ENCODE measurements at regions of chr15 and their contacts with region 1.

Region 1: GRCh38 chr15:75207618-75208500 is 6.2 kb downstream of the C15orf39 start:
- DNase-seq: no peak
- H3K4me3 ChIP-seq: no peak overlapping the region
- H3K27ac ChIP-seq: peak overlapping the region; percentile 1 to 23
- H3K4me1 ChIP-seq: peaks cover 0 to 77% (median 56%) of the 10 kb centered on the region in 4 donors
- H3K27me3 ChIP-seq: no peaks in the 10 kb centered on the region
- CTCF ChIP-seq: no peak

Region 2: DNA sequence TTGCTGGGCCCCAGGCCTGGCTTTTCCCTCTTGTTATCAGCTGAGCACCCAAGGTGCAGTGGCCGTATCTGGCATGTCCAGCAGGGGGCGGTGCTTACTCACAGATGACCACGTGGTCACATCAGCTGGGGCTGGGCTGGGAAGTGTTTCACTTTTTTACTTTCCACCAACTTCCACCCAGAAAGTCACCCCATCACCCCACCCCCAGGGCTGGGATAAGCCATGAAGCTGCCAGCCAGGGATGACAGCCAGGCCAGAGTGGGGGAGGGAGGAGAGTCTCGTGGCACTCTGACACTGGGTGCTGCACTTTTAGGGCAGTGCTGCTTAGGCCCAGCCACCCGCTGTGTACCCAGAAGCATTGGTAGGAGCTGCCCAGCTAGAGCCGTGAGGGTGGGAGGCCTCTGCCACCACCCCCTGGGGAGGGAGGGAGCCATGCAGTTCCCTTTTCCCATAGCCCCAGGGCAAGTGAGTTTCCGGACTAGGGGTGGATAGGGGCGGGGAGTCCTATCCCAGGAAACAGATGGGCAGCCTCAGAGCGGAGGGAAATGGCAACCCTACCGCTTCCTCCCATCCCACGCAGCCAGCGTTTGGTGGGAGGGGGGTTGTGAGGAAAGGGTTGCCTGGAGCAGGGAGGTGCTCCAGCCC is 178.4 kb before region 1 on chr15:
- intact Hi-C with region 1: loop called (anchors 2 kb)
- DNase-seq: peak; percentile 97
- H3K4me3 ChIP-seq: peak overlapping the region; percentile 14 to 40
- H3K27ac ChIP-seq: peak overlapping the region; percentile 78 to 84
- H3K4me1 ChIP-seq: peaks cover 8 to 51% (median 41%) of the 10 kb centered on the region in 4 donors
- H3K27me3 ChIP-seq: no peaks in the 10 kb centered on the region
- CTCF ChIP-seq: peak; percentile 82 to 99

Region 3: DNA sequence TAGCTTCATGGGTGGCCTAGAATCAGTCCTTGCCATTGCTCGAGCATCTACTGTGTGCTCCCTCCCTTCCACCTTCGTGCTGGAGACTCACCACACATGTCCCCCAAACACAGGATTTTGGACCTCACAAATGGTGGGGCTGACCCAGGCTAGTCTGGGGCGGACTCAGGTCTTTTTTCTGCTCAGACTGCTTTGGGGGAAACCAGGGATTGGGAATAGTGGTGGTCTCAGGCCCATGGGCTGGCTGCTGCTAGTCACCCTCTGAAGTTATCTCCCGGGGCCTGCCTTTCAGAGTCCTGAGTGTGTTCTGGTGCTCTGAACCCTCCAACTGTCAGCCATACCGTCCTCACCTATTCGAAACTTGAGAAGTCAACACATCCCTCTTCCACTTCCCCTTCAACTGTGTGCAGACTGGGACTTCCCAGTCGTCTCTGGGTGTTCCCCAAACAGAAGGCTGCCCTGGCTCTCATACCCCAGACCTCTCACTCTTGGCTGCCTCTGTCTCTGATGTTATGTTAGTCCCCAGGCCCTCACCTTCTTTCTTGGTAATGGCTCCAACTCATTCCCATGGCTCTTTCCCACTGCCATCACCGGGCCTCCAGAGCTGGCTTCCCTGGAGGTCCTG is 138.4 kb before region 1 on chr15:
- intact Hi-C with region 1: no loop called
- DNase-seq: no peak
- H3K4me3 ChIP-seq: no peak overlapping the region
- H3K27ac ChIP-seq: no peak overlapping the region
- H3K4me1 ChIP-seq: peaks cover 0 to 35% (median 24%) of the 10 kb centered on the region in 4 donors
- H3K27me3 ChIP-seq: no peaks in the 10 kb centered on the region
- CTCF ChIP-seq: no peak